Sigmoid colon (tissue), 7 donors: ENCODE measurements at regions of chr3 and their contacts with region 1.

Region 1: DNA sequence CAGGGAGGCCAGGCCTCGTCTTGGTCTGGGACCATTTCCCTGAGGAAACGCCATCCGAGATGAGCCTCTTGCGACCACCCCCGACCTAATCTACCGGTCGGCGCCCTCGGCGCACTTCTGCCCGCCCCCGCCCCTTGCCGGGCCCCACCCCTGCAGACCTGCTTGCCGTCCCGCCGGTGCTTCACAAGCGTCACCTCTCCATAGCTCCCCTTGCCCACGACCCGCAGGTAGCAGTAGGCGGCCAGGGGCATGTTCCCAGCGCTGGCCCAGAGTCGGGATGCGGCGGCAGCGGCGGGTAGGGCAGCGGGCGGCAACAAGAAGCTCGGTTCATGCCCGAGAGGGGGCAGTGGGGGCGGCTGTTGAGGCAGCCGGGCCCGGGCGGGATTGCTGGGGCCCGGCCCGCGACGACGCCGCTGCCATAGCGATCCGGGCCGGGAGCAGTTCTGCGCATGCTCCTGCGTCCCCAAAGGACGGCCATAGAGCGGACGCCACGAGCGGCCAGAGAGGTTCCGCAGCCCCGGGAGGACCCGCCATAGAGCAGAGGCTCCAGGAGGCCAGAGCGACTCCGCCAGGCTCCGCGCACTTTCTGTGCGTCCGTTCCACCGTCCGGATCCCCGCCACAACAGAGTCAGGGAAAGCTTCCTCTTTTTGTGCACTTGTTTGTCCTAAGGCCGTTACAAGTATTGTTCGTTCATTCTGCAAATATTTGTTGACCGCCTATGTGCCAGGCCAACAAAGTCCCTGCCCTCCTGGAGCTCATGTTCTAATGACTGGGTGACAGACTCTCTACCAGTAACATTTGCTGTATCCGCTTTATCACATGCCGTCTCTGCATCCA is at the start of gene NEK4:
- DNase-seq: peak; percentile 95
- H3K4me3 ChIP-seq: peak within 1 kb of the TSS; percentile 75 to 94 (median 83)
- H3K27ac ChIP-seq: peak within 1 kb of the TSS; percentile 69 to 80 (median 78)
- H3K4me1 ChIP-seq: peaks cover 0 to 20% (median 15%) of the 10 kb centered on the region in 4 donors
- H3K27me3 ChIP-seq: no peaks in the 10 kb centered on the region
- CTCF ChIP-seq: no peak
- EP300 ChIP-seq: no peak
- POLR2A ChIP-seq: peak; percentile 44 to 52
- total RNA-seq, gene NEK4: 17.1 to 19.4 (median 19.0) TPM

Region 2: DNA sequence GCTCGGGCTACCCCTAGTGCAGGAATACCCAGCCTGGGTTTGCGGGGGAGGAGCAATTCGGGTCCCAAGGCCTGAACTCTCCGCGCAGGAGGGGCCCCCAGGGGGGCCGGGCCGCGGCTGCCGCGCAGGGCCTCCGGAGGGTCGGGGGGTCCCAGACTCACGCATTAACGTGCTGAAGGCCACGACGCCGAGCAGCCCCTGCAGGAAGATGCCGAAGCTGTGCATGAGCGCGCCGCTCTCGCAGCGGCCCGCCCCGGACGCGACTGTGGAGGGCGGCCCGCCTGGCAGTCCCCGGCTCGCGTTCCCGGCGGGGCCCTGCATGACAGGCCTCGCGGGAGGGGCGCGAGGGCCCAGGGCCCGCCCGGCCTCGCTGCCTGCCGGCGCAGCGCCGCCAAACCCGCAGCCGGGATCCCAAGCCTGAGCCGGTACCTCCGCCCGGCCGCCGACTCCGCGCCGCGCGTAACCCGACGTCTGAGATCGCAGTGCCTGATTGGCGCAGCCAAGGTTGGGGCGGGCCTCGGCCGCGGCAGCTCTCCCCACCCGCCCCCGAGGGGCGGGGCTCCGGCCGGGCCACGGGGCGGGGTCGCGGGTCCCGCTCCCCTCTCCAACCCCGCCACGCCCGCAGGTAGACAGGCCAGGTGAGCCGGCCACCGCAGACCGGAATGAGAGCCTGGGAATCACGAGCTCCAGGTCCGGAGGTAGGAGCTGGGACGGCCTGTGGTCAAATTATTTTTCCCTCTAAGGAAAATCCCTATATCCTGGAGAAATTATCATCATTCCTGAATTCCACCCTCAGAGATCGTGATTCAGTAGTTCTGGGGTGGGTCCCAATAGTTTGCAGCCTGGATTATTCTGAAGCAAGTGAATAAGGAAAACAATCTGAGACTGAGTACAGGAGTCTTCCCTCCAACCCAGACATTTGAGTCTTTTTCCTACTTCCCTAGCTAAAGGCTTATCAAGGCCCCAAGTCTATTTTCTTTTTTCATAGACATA is 126.7 kb after region 1 on chr3 and contains the start of gene STIMATE:
- intact Hi-C with region 1: loop called (anchors 2 kb)
- DNase-seq: peak; percentile 92
- H3K4me3 ChIP-seq: peak within 1 kb of the TSS; percentile 67 to 91 (median 78)
- H3K27ac ChIP-seq: peak within 1 kb of the TSS; percentile 70 to 83 (median 77)
- H3K4me1 ChIP-seq: peaks cover 0 to 47% (median 35%) of the 10 kb centered on the region in 4 donors
- H3K27me3 ChIP-seq: no peaks in the 10 kb centered on the region
- CTCF ChIP-seq: no peak
- EP300 ChIP-seq: no peak
- POLR2A ChIP-seq: no peak
- total RNA-seq, gene STIMATE: 11.5 to 19.5 (median 14.7) TPM

Region 3: DNA sequence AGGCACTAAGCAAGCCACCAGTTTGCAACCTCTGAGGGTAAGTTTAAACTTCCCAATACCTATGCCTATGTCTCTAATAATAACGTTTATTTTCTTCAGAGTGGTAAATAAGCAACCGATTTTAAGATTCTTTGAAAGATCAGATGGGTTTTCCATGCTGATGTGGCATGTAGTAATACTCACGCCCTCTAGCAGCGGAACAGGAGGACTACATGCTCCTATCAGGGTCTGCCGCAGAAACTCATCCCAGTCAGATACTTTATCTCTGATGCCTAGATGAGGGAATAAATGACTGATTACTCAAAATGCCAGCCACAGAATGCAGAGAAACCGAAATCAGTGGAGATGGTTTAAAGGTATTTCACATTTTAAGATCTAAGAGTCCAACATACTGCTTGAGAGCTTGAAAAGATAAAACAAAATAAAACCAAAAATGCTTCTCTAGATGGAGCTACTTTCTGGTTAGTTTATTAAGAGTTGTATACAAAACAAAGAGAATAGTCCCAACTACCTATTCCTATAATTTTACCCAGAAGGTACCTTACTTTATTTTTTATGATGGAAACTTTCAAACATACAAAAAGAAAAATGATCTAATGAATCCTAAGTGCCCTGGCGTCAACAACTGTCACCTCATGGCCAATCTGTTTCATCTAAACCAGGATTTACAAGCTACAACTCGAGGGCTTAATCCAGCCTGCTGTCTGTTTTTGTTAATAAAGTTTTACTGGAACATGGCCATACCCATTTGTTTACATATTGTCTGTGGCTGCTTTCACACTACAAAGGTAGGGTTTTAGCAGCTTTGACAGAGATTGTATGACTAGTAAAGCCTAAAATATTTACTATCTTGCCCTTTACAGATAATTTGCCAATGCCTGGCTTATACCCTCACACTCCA is 164.2 kb after region 1 on chr3:
- intact Hi-C with region 1: loop called (anchors 10 kb)
- DNase-seq: no peak
- H3K4me3 ChIP-seq: no peak overlapping the region
- H3K27ac ChIP-seq: no peak overlapping the region
- H3K4me1 ChIP-seq: peaks cover 0 to 10% (median 0%) of the 10 kb centered on the region in 4 donors
- H3K27me3 ChIP-seq: no peaks in the 10 kb centered on the region
- CTCF ChIP-seq: peak; percentile 39 to 69 (median 52)
- EP300 ChIP-seq: no peak
- POLR2A ChIP-seq: no peak

Region 4: DNA sequence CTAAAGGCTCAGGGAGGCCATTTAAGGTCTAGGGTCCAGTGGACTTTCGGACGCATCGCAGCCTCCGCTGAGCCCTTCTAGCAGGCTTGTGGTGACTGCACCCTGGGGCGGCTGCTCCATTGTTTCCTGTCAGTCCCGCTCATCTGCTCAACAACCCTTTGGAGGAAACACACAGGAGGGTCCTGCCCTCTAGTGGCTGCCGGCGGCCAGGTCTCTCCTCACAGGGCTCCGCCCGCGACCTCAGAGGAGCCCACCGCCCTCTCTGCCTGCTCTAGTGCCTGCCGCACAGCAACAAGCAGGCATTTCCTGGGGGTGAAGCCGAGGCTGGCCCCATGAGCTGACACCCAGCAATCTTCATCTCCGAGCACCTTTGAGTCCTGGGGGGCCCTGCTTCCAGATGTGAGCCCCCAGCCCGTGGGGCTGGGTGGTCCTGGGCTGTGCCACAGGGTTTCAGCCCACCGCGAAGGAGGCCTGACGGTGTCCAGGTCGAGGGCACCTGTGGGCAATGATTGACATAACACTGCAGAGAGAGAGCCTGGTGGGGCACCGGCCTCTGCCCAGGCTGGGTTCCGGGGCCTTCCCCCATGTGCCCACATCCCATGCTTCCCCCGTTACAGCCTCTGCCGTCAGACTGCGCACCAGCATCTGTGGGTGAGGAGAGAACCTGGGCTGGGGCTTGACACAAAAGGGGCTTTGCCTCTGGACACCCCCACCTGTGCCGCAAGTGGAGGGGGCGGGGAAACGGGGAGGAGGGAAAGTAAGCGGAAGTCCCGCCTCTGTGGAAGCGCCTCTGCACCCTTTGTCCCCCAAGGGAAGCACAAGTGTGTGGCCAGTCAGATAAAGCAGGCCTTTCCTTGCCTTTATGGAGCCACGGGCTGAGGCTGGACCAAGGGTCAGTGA is 302.2 kb after region 1 on chr3:
- intact Hi-C with region 1: loop called (anchors 2 kb)
- DNase-seq: peak; percentile 87
- H3K4me3 ChIP-seq: peak overlapping the region; percentile 51 to 67 (median 64)
- H3K27ac ChIP-seq: peak overlapping the region; percentile 61 to 75 (median 69)
- H3K4me1 ChIP-seq: peaks cover 4 to 14% (median 12%) of the 10 kb centered on the region in 4 donors
- H3K27me3 ChIP-seq: no peaks in the 10 kb centered on the region
- CTCF ChIP-seq: peak; percentile 82 to 97 (median 92)
- EP300 ChIP-seq: no peak
- POLR2A ChIP-seq: no peak